ENCODE measurements at regions of chr2 and their contacts with region 1.

Region 1: DNA sequence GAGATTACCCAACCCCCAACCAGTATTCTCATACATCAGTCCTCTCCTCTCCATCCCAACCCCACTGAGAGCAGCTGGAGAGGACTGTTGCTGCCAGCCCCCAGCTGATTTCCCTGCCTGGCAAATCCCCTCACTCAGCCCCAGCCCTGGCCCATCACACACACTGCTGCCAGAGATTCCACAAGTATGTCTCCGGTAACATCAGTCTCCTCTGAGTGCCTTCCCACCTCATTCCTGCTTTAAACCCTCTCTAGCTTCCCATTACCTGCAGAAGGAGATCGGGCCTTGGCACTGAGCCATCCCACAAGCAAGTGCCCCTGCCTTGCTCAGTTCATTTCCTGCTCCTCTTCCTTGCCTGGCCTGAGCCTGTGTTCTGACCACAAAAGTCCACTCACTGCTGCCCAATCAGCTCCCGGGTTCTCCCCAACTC is 50.6 kb upstream of the ZFP36L2 start:
- DNase-seq: peak in 1 of 5 donors; percentile 37
- ATAC-seq: peak in 2 of 4 donors; percentile 8 to 38
- H3K4me3 ChIP-seq: no peak overlapping the region
- H3K27ac ChIP-seq: peak overlapping the region in 10 of 12 donors; percentile 3 to 61 (median 29)
- H3K4me1 ChIP-seq: peaks cover 3 to 37% (median 17%) of the 10 kb centered on the region in 12 donors
- H3K27me3 ChIP-seq: no peaks in the 10 kb centered on the region
- CTCF ChIP-seq: no peak
- POLR2A ChIP-seq: no peak

Region 2: GRCh38 chr2:43226955-43227829 is 49.8 kb before region 1 on chr2:
- intact Hi-C with region 1: no loop called
- DNase-seq: peak; percentile 92 to 97 (median 96)
- ATAC-seq: peak; percentile 75 to 76 (median 75)
- H3K4me3 ChIP-seq: peak overlapping the region; percentile 65 to 97 (median 84)
- H3K27ac ChIP-seq: peak overlapping the region; percentile 96 to 99 (median 99)
- H3K4me1 ChIP-seq: peaks cover 3 to 70% (median 31%) of the 10 kb centered on the region in 12 donors
- H3K27me3 ChIP-seq: no peaks in the 10 kb centered on the region
- CTCF ChIP-seq: peak in 10 of 12 donors; percentile 34 to 69 (median 50)
- POLR2A ChIP-seq: no peak

Region 3: GRCh38 chr2:43312755-43313641 is 36.0 kb after region 1 on chr2:
- intact Hi-C with region 1: loop called in 1 of 10 experiments (anchors 5 kb)
- DNase-seq: peak in 1 of 5 donors; percentile 11
- ATAC-seq: peak in 3 of 4 donors; percentile 50 to 57 (median 52)
- H3K4me3 ChIP-seq: no peak overlapping the region
- H3K27ac ChIP-seq: peak overlapping the region in 11 of 12 donors; percentile 19 to 74 (median 61)
- H3K4me1 ChIP-seq: peaks cover 4 to 38% (median 22%) of the 10 kb centered on the region in 12 donors
- H3K27me3 ChIP-seq: no peaks in the 10 kb centered on the region
- CTCF ChIP-seq: no peak
- POLR2A ChIP-seq: no peak